ENCODE measurements at regions of chrX and their contacts with region 1.

Region 1: GRCh38 chrX:129754056-129755024 is 15.6 kb downstream of the XPNPEP2 start:
- DNase-seq: no peak
- ATAC-seq: no peak
- H3K4me3 Mint-ChIP-seq: peak overlapping the region; percentile 8
- H3K27ac Mint-ChIP-seq: peak overlapping the region; percentile 54
- H3K4me1 Mint-ChIP-seq: peaks cover 69% of the 10 kb centered on the region
- H3K27me3 Mint-ChIP-seq: no peaks in the 10 kb centered on the region

Region 2: GRCh38 chrX:129606918-129607317 is 147.4 kb before region 1 on chrX:
- CTCF ChIA-PET with region 1: interaction called, 12 read pairs
- POLR2A ChIA-PET with region 1: no interaction called
- DNase-seq: peak; percentile 69
- ATAC-seq: peak; percentile 48
- H3K4me3 Mint-ChIP-seq: no peak overlapping the region
- H3K27ac Mint-ChIP-seq: no peak overlapping the region
- H3K4me1 Mint-ChIP-seq: peaks cover 22% of the 10 kb centered on the region
- H3K27me3 Mint-ChIP-seq: peaks cover 7% of the 10 kb centered on the region

Region 3: GRCh38 chrX:129654419-129655165 is 99.7 kb before region 1 on chrX and contains the start of gene APLN:
- CTCF ChIA-PET with region 1: interaction called, 12 read pairs
- POLR2A ChIA-PET with region 1: no interaction called
- DNase-seq: peak; percentile 26
- ATAC-seq: peak; percentile 79
- H3K4me3 Mint-ChIP-seq: peak within 1 kb of the TSS; percentile 66
- H3K27ac Mint-ChIP-seq: no peak within 1 kb of the TSS
- H3K4me1 Mint-ChIP-seq: peaks cover 7% of the 10 kb centered on the region
- H3K27me3 Mint-ChIP-seq: peaks cover 9% of the 10 kb centered on the region
- total RNA-seq, gene APLN: 2.1 to 2.7 TPM

Region 4: DNA sequence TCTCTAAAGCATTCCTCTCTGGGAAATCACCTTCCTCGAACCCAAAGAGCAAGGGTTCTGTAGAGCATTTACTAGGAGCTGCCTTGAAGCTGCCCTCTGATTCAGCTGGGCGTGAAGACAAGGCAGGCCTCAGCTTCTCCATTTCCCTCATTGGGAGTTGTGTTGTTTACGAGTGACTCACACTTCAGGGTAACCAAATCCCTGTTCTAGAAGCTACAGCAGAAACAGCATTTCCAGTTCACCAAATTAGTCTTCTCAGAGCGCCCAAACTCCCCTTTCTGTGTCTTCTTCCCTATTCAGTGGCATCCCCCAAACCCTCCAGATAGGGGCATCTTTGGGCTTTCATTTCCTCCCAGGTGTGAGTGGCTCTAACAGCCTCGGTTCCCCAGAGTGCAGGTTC is 16.4 kb before region 1 on chrX:
- CTCF ChIA-PET with region 1: interaction called, 16 read pairs
- POLR2A ChIA-PET with region 1: no interaction called
- DNase-seq: no peak
- ATAC-seq: no peak
- H3K4me3 Mint-ChIP-seq: no peak overlapping the region
- H3K27ac Mint-ChIP-seq: peak overlapping the region; percentile 46
- H3K4me1 Mint-ChIP-seq: peaks cover 57% of the 10 kb centered on the region
- H3K27me3 Mint-ChIP-seq: no peaks in the 10 kb centered on the region

Region 5: GRCh38 chrX:129781134-129781672 is 26.9 kb after region 1 on chrX:
- CTCF ChIA-PET with region 1: interaction called, 40 read pairs
- POLR2A ChIA-PET with region 1: interaction called, 165 read pairs
- DNase-seq: peak; percentile 91
- ATAC-seq: peak; percentile 75
- H3K4me3 Mint-ChIP-seq: peak overlapping the region; percentile 89
- H3K27ac Mint-ChIP-seq: peak overlapping the region; percentile 94
- H3K4me1 Mint-ChIP-seq: peaks cover 55% of the 10 kb centered on the region
- H3K27me3 Mint-ChIP-seq: no peaks in the 10 kb centered on the region

Measured in activated CD8-positive, alpha-beta T cell treated with anti-CD3 and anti-CD28 coated beads, Interleukin-2, amount 10 ng/mL, durations not matched to agents 7 days and 5 days (primary cell).